CD8-positive, alpha-beta T cell (primary cell): ENCODE measurements at regions of chr6 and their contacts with region 1.

Region 1: GRCh38 chr6:149746147-149746946 is at the start of gene NUP43:
- DNase-seq: peak; percentile 85 to 95 (median 93)
- ATAC-seq: peak; percentile 74
- H3K4me3 ChIP-seq: peak within 1 kb of the TSS; percentile 69 to 79
- H3K4me3 Mint-ChIP-seq: peak within 1 kb of the TSS; percentile 97
- H3K27ac ChIP-seq: peak within 1 kb of the TSS; percentile 55 to 58
- H3K27ac Mint-ChIP-seq: peak within 1 kb of the TSS; percentile 94
- H3K4me1 ChIP-seq: peaks cover 31% of the 10 kb centered on the region
- H3K4me1 Mint-ChIP-seq: peaks cover 30% of the 10 kb centered on the region
- H3K27me3 ChIP-seq: no peaks in the 10 kb centered on the region
- H3K27me3 Mint-ChIP-seq: no peaks in the 10 kb centered on the region
- CTCF ChIP-seq: peak; percentile 54
- total RNA-seq, gene NUP43: 9.7 to 10.3 TPM

Region 2: DNA sequence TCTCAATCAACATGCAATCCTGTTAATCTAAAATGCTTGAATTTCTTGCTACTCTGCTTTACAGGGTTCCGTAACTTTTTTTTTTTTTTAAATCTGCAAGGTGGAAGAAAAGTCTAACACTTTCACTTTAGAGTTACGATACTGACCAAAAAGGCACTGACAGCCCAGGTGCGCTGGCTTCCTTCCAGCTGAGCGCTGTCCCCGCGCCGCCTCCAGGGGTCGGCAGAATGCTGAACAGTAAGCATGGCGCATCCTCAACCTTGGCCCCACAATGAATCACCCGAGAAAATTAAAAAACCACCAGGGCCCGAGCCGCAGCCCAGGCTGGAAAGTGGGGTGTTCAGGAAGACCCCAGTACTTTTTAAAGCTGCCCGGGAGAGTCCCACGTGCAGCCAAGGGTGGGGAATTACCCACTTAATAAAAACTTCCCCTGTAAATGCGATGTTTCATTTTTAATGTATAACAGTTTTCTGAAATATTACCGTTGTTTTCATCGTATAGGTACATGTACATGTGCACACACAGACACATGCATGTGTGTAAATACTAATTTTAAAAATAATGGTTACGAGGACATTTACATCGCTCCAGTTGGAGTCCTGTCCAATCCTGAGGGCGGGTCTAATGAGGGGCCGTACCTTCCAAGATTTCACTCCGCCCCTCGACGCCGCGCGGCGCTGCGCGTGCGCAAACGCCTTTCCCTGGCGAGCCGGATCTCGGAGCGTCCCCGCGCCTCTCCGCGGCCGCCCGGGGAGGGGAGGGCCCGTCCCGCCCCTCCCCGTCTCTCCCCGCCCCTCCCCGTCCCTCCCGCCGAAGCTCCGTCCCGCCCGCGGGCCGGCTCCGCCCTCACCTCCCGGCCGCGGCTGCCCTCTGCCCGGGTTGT is 180.6 kb before region 1 on chr6 and contains the start of gene GINM1:
- CTCF ChIA-PET with region 1: no interaction called
- POLR2A ChIA-PET with region 1: interaction called, 4 read pairs
- intact Hi-C with region 1: loop called (anchors 1 to 5 kb)
- DNase-seq: peak; percentile 91 to 97 (median 94)
- ATAC-seq: peak; percentile 83
- H3K4me3 ChIP-seq: peak within 1 kb of the TSS; percentile 84 to 98
- H3K4me3 Mint-ChIP-seq: peak within 1 kb of the TSS; percentile 88
- H3K27ac ChIP-seq: peak within 1 kb of the TSS; percentile 75 to 88
- H3K27ac Mint-ChIP-seq: peak within 1 kb of the TSS; percentile 95
- H3K4me1 ChIP-seq: peaks cover 7% of the 10 kb centered on the region
- H3K4me1 Mint-ChIP-seq: peaks cover 18% of the 10 kb centered on the region
- H3K27me3 ChIP-seq: no peaks in the 10 kb centered on the region
- H3K27me3 Mint-ChIP-seq: no peaks in the 10 kb centered on the region
- CTCF ChIP-seq: peak; percentile 78
- total RNA-seq, gene GINM1: 32.7 to 35.2 TPM

Region 3: GRCh38 chr6:149717588-149718458 is 28.5 kb before region 1 on chr6 and contains the start of gene LATS1:
- CTCF ChIA-PET with region 1: interaction called, 18 read pairs
- POLR2A ChIA-PET with region 1: interaction called, 15 read pairs
- intact Hi-C with region 1: loop called (anchors 1 kb)
- DNase-seq: peak; percentile 79 to 96 (median 91)
- ATAC-seq: peak; percentile 89
- H3K4me3 ChIP-seq: peak within 1 kb of the TSS; percentile 66 to 91
- H3K4me3 Mint-ChIP-seq: peak within 1 kb of the TSS; percentile 86
- H3K27ac ChIP-seq: peak within 1 kb of the TSS; percentile 86 to 94
- H3K27ac Mint-ChIP-seq: peak within 1 kb of the TSS; percentile 96
- H3K4me1 ChIP-seq: peaks cover 27% of the 10 kb centered on the region
- H3K4me1 Mint-ChIP-seq: peaks cover 43% of the 10 kb centered on the region
- H3K27me3 ChIP-seq: peaks cover 0 to 2% of the 10 kb centered on the region in 2 experiments
- H3K27me3 Mint-ChIP-seq: no peaks in the 10 kb centered on the region
- CTCF ChIP-seq: no peak
- total RNA-seq, gene LATS1: 37.2 to 39.1 TPM

Region 4: GRCh38 chr6:149863697-149864577 is 117.6 kb after region 1 on chr6 and contains the start of gene LRP11:
- CTCF ChIA-PET with region 1: no interaction called
- POLR2A ChIA-PET with region 1: no interaction called
- intact Hi-C with region 1: loop called (anchors 1 to 5 kb)
- DNase-seq: peak; percentile 65 to 87 (median 77)
- ATAC-seq: peak; percentile 90
- H3K4me3 ChIP-seq: peak within 1 kb of the TSS; percentile 38 to 60
- H3K4me3 Mint-ChIP-seq: peak within 1 kb of the TSS; percentile 85
- H3K27ac ChIP-seq: peak within 1 kb of the TSS in 1 of 2 experiments; percentile 18
- H3K27ac Mint-ChIP-seq: no peak within 1 kb of the TSS
- H3K4me1 ChIP-seq: peaks cover 7% of the 10 kb centered on the region
- H3K4me1 Mint-ChIP-seq: peaks cover 11% of the 10 kb centered on the region
- H3K27me3 ChIP-seq: peaks cover 3 to 4% of the 10 kb centered on the region in 2 experiments
- H3K27me3 Mint-ChIP-seq: peaks cover 34% of the 10 kb centered on the region
- CTCF ChIP-seq: no peak
- total RNA-seq, gene LRP11: 0.17 TPM in 1 of 2 experiments, not detected in the other

Region 5: GRCh38 chr6:149941583-149942431 is 195.5 kb after region 1 on chr6 and contains the start of gene ULBP2:
- CTCF ChIA-PET with region 1: no interaction called
- POLR2A ChIA-PET with region 1: no interaction called
- intact Hi-C with region 1: loop called in 1 of 2 experiments (anchors 5 kb)
- DNase-seq: peak; percentile 80 to 98 (median 91)
- ATAC-seq: peak; percentile 90
- H3K4me3 ChIP-seq: peak within 1 kb of the TSS; percentile 81 to 86
- H3K4me3 Mint-ChIP-seq: peak within 1 kb of the TSS; percentile 94
- H3K27ac ChIP-seq: peak within 1 kb of the TSS; percentile 26 to 50
- H3K27ac Mint-ChIP-seq: peak within 1 kb of the TSS; percentile 92
- H3K4me1 ChIP-seq: peaks cover 21% of the 10 kb centered on the region
- H3K4me1 Mint-ChIP-seq: peaks cover 31% of the 10 kb centered on the region
- H3K27me3 ChIP-seq: peaks cover 29% of the 10 kb centered on the region in 2 experiments
- H3K27me3 Mint-ChIP-seq: peaks cover 34% of the 10 kb centered on the region
- CTCF ChIP-seq: no peak
- total RNA-seq, gene ULBP2: 7.2 to 9.7 TPM